ENCODE measurements at regions of chr3 and their contacts with region 1.

Region 1: DNA sequence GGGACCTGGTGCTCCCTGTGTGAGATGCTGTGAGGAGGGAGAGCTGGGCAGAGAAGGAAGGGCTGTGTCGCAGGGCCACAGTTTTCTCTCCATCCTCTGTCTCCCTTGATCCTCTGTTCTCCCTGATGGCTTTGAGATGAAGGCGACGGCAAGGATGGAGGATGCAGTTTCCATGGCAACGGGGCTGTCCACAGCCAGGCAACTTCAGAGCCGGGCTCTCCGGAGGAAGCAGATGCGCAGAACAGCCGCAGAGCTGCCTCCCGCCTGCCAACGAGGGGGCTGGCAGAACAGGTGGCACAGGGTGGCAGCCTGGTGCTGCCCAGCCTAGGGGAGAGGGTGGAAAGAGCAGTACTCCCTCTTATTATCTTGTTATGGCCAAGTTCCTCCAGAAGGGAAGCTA is 9.9 kb upstream of the GRM2 start:
- DNase-seq: no peak
- H3K4me3 ChIP-seq: no peak overlapping the region
- H3K27ac ChIP-seq: no peak overlapping the region
- H3K4me1 ChIP-seq: no peaks in the 10 kb centered on the region
- H3K27me3 ChIP-seq: no peaks in the 10 kb centered on the region
- CTCF ChIP-seq: no peak

Region 2: DNA sequence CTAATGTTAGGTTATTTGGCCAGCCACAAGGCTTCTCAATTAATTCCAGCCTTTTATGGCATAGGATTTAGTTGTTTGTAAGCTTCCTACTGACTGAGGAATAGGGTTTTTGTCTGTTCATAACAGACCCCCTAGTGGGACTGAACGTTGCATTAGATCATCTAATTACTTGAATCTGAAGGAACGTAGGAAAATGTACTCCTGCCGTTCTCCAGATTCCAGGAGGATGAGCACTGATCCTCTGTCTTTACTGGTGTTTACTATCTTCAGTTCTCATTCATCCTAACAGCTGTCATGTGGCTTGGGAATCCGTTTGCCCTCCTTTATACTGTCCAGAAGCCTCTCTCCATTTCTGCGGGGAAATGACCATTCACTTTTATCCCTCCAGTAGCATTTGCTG is 105.7 kb before region 1 on chr3:
- CTCF ChIA-PET with region 1: no interaction called
- dilution Hi-C with region 1: loop called (anchors 5 kb)
- in situ Hi-C with region 1: no loop called
- intact Hi-C with region 1: no loop called
- DNase-seq: no peak
- H3K4me3 ChIP-seq: no peak overlapping the region
- H3K27ac ChIP-seq: no peak overlapping the region
- H3K4me1 ChIP-seq: no peaks in the 10 kb centered on the region
- H3K27me3 ChIP-seq: no peaks in the 10 kb centered on the region
- CTCF ChIP-seq: no peak

Region 3: DNA sequence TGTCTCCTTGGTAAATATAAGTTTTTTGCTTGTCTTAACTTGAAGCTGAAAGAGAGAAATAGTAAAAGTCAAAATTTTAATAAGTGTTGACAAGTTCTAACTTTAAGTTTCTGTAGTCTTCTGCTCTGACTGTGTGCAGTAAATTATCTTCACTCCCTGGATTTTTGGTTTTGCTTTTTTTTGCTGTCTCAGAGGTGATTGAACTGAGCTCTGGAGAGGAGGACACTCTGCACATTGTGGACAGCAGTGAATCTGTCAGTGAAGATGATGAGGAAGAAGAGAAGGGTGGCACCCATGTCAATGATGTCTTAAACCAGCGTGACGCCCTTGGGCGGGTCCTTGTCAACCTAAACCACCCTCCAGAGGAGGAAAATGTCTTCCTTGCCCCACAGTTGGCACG is 66.4 kb before region 1 on chr3:
- CTCF ChIA-PET with region 1: no interaction called
- dilution Hi-C with region 1: loop called (anchors 5 kb)
- in situ Hi-C with region 1: no loop called
- intact Hi-C with region 1: no loop called
- DNase-seq: no peak
- H3K4me3 ChIP-seq: no peak overlapping the region
- H3K27ac ChIP-seq: no peak overlapping the region
- H3K4me1 ChIP-seq: no peaks in the 10 kb centered on the region
- H3K27me3 ChIP-seq: no peaks in the 10 kb centered on the region
- CTCF ChIP-seq: no peak

Region 4: DNA sequence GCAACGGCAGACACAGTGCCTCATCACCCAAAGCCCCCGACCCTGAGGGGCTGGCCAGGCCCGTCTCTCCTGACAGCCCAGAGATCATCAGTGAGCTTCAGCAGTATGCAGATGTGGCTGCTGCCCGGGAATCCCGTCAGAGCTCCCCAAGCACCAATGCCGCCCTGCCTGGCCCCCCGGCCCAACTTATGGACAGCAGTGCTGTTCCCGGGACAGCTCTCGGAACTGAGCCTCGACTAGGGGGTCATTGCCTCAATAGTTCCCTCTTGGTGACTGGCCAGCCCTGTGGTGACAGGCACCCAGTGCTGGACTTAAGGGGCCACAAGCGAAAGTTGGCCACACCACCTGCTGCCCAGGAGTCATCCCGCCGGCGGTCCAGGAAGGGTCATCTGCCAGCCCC is 34.5 kb before region 1 on chr3:
- CTCF ChIA-PET with region 1: no interaction called
- dilution Hi-C with region 1: no loop called
- in situ Hi-C with region 1: no loop called
- intact Hi-C with region 1: no loop called
- DNase-seq: no peak
- H3K4me3 ChIP-seq: no peak overlapping the region
- H3K27ac ChIP-seq: no peak overlapping the region
- H3K4me1 ChIP-seq: no peaks in the 10 kb centered on the region
- H3K27me3 ChIP-seq: no peaks in the 10 kb centered on the region
- CTCF ChIP-seq: no peak

Region 5: GRCh38 chr3:51734572-51734907 is 37.6 kb after region 1 on chr3:
- CTCF ChIA-PET with region 1: no interaction called
- dilution Hi-C with region 1: loop called (anchors 5 kb)
- in situ Hi-C with region 1: no loop called
- intact Hi-C with region 1: no loop called
- DNase-seq: no peak
- H3K4me3 ChIP-seq: no peak overlapping the region
- H3K27ac ChIP-seq: no peak overlapping the region
- H3K4me1 ChIP-seq: peaks cover 6% of the 10 kb centered on the region
- H3K27me3 ChIP-seq: peaks cover 6% of the 10 kb centered on the region
- CTCF ChIP-seq: no peak